Posterior vena cava (tissue), 2 donors: ENCODE measurements at regions of chr6 and their contacts with region 1.

Region 1: DNA sequence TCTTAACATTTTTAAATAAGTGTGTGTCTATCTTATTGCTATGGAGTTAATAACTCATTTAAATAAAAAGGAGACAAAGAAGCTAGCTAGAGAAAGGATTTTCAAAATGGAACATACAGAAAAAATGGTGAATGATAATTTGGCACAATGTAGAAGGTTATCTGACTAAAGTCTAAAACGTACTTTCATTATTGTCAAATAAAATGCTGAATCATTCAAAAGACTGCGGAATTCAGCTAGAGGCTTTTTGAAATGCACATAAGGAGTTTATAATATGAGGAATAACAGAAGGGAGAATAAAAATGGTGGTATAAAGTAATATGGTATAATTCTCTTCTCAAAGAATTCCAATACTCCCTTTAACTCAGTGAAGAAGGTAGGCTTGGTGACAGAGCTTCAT is 597.9 kb downstream of the KHDRBS2 start:
- DNase-seq: no peak

Region 2: GRCh38 chr6:61640463-61640862 is 47.7 kb before region 1 on chr6:
- intact Hi-C with region 1: no loop called
- DNase-seq: no peak

Region 3: GRCh38 chr6:61745994-61746393 is 57.8 kb after region 1 on chr6:
- intact Hi-C with region 1: loop called in 1 of 2 experiments (anchors 2 kb)
- DNase-seq: no peak